Activated CD4-positive, alpha-beta T cell treated with anti-CD3 and anti-CD28 coated beads for 36 hours (primary cell): ENCODE measurements at regions of chr2 and their contacts with region 1.

Region 1: DNA sequence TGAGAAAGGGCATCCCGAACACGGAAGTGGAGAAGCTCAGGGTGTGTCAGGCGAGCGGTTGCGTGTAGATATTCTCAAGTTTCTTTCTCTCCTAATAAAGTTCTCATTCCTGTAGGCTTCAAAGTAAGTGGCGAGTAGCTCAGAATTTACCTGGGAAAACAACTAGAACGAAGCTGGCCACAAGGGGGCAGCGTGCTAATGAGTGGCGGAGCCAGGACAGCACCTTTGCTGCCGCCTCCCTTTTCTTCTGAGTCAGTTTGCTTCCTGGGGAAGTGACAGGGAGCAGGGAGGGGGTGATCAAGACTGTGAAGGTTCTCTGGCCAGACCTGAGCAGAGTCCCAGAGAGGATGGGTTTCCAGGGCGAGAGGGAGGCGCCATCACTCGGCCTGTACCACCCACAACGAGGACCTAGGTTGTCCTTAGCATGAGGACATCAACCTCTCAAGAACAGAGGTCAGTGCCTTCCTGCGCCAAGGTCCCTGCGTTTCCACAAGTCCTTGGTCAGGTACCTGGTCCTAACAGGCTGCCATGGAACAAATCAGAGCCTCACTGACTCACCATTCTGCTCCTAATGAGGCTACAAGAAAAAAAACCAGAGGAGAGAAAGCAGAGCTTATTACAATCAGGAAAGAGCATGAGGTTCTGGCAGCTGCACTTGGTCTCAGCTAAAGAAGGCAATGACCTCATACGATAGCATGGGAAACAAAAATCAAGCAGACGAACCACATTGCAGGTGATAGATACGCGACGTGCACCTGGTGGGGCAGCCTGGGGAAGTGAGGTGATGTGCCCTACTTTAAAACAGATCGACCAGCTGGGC is 98.6 kb downstream of the PLB1 start:
- DNase-seq: peak; percentile 93
- ATAC-seq: peak; percentile 90
- H3K4me3 Mint-ChIP-seq: peak overlapping the region; percentile 39
- H3K27ac Mint-ChIP-seq: peak overlapping the region; percentile 75
- H3K4me1 Mint-ChIP-seq: peaks cover 18% of the 10 kb centered on the region
- H3K27me3 Mint-ChIP-seq: no peaks in the 10 kb centered on the region

Region 2: DNA sequence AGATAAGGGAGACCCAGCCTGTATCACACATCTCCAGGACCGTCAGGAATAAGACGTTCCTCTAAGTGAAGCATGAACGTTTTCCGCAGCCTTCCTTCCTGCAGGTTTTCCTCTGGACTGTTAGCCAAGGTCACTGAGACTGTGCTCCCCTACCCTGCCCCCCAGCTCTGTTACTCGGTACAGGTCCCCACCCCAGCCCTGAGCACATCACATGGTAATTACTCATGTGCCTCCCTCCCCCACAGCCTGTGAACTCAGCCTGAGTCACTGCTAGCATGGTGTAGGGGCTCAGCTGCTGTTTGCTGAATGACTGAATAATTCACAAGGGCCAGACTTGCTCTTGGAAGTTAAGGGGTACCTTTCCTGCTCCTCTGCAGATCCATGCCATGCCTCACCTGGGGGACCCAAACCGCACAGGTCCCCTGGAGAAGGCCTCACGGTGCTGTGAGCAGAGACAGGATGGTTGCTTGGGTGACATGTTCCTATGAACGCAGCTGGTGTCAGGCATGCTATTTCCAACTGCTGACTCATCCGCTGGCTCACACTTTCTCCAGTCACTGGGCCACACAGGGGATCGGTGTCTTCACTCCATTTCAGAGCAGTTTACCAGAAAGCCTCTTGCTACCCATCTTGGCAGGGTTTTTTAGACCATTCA is 10.5 kb before region 1 on chr2:
- CTCF ChIA-PET with region 1: interaction called, 55 read pairs
- POLR2A ChIA-PET with region 1: interaction called, 9 read pairs
- intact Hi-C with region 1: no loop called
- DNase-seq: peak; percentile 89
- ATAC-seq: peak; percentile 96
- H3K4me3 Mint-ChIP-seq: peak overlapping the region; percentile 7
- H3K27ac Mint-ChIP-seq: peak overlapping the region; percentile 82
- H3K4me1 Mint-ChIP-seq: peaks cover 45% of the 10 kb centered on the region
- H3K27me3 Mint-ChIP-seq: peaks cover 2% of the 10 kb centered on the region

Region 3: DNA sequence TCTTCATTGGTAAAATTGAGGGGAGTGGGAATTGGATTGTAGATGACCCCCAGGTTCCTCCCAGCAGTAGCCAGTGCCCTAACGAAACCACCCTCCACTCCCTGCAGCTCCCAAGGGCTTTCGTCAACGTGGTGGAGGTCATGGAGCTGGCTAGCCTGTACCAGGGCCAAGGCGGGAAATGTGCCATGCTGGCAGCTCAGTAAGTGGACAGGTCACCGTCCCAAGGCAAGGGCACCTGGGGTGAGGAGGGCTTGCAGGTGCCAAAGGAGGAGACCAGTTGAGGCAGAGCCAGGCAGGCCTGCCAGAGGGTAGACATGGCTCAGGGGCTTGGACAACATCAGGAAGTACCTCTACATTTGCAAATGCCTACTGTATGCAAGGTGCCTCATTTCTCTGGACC is 34.5 kb after region 1 on chr2:
- CTCF ChIA-PET with region 1: interaction called, 11 read pairs
- POLR2A ChIA-PET with region 1: no interaction called
- intact Hi-C with region 1: no loop called
- DNase-seq: no peak
- ATAC-seq: no peak
- H3K4me3 Mint-ChIP-seq: no peak overlapping the region
- H3K27ac Mint-ChIP-seq: no peak overlapping the region
- H3K4me1 Mint-ChIP-seq: peaks cover 42% of the 10 kb centered on the region
- H3K27me3 Mint-ChIP-seq: no peaks in the 10 kb centered on the region

Region 4: DNA sequence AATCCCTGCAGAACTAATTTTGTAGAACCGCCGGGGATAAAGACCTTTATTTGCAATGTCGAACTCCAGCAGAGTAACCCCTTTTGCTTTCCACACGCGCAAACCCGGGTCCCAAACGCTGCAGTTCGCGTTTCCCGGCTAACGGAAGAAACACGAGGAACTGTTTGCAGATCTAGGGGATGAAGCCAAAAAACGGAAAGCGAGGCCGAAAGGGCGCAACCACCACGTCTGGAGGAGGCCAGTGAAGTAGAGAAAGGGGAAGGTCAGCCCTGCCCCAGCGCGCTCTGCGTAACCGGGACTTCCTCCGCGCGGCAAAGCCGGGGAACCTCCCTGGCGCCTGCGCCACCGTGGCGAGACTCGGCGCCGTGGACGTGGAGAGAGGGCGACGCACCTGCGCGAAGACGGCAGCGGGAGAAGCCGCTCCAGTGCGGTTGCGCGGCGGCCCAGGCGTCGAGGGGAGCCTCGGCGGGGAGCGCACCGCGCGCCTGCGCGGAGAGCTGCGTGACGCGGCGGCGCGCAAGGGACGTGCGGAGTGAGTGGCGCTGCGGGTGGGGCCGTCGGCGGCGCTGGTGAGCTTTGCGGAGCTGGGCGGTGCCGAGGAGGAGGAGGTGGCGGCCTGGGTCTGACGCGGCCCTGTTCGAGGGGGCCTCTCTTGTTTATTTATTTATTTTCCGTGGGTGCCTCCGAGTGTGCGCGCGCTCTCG is 156.9 kb after region 1 on chr2 and contains the start of gene PPP1CB:
- CTCF ChIA-PET with region 1: interaction called, 43 read pairs
- POLR2A ChIA-PET with region 1: interaction called, 10 read pairs
- intact Hi-C with region 1: loop called (anchors 1 kb)
- DNase-seq: peak; percentile 96
- ATAC-seq: peak; percentile 88
- H3K4me3 Mint-ChIP-seq: peak within 1 kb of the TSS; percentile 90
- H3K27ac Mint-ChIP-seq: peak within 1 kb of the TSS; percentile 95
- H3K4me1 Mint-ChIP-seq: peaks cover 53% of the 10 kb centered on the region
- H3K27me3 Mint-ChIP-seq: no peaks in the 10 kb centered on the region
- total RNA-seq, gene PPP1CB: 153 to 213 TPM

Region 5: GRCh38 chr2:28780496-28780895 is 186.0 kb after region 1 on chr2:
- CTCF ChIA-PET with region 1: interaction called, 13 read pairs
- POLR2A ChIA-PET with region 1: no interaction called
- intact Hi-C with region 1: no loop called
- DNase-seq: no peak
- ATAC-seq: no peak
- H3K4me3 Mint-ChIP-seq: no peak overlapping the region
- H3K27ac Mint-ChIP-seq: peak overlapping the region; percentile 34
- H3K4me1 Mint-ChIP-seq: peaks cover 20% of the 10 kb centered on the region
- H3K27me3 Mint-ChIP-seq: no peaks in the 10 kb centered on the region

Region 6: GRCh38 chr2:28870146-28870891 is 275.8 kb after region 1 on chr2 and contains the start of gene TRMT61B:
- CTCF ChIA-PET with region 1: interaction called, 3 read pairs
- POLR2A ChIA-PET with region 1: no interaction called
- intact Hi-C with region 1: loop called in 1 of 2 experiments (anchors 1 kb)
- DNase-seq: peak; percentile 98
- ATAC-seq: peak; percentile 99
- H3K4me3 Mint-ChIP-seq: peak within 1 kb of the TSS; percentile 94
- H3K27ac Mint-ChIP-seq: peak within 1 kb of the TSS; percentile 97
- H3K4me1 Mint-ChIP-seq: peaks cover 25% of the 10 kb centered on the region
- H3K27me3 Mint-ChIP-seq: no peaks in the 10 kb centered on the region
- total RNA-seq, gene TRMT61B: 22.0 to 22.2 TPM